ENCODE measurements at regions of chr2 and their contacts with region 1.

Region 1: DNA sequence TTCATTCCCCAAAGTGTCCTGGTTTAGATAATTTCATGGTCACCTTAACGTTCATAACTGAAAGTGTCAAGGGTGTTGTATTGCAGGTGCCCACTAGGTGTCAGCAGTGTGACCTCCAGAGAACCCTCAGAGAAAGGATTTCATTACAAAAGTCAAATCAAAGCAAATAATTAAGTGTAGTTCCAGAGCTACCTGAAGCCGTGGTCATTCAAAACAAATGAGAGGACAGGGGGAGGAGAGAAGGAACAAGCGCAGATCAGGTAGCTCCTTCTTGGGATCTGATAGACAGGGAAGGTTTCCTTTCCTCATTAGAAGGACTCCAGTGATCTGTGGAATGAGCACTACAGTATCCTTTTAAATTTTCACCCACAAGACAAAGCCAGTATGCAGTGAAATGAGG is at the start of gene SLC9A4:
- DNase-seq: peak in 1 of 2 experiments; percentile 70
- H3K4me3 ChIP-seq: no peak within 1 kb of the TSS
- H3K27ac ChIP-seq: no peak within 1 kb of the TSS
- H3K4me1 ChIP-seq: no peaks in the 10 kb centered on the region
- H3K27me3 ChIP-seq: no peaks in the 10 kb centered on the region
- CTCF ChIP-seq: peak; percentile 8 to 76 (median 57)
- EP300 ChIP-seq: no peak
- POLR2A ChIP-seq: no peak
- RAD21 ChIP-seq: peak; percentile 69 to 73
- total RNA-seq, gene SLC9A4: not detected in 2 replicates

Region 2: DNA sequence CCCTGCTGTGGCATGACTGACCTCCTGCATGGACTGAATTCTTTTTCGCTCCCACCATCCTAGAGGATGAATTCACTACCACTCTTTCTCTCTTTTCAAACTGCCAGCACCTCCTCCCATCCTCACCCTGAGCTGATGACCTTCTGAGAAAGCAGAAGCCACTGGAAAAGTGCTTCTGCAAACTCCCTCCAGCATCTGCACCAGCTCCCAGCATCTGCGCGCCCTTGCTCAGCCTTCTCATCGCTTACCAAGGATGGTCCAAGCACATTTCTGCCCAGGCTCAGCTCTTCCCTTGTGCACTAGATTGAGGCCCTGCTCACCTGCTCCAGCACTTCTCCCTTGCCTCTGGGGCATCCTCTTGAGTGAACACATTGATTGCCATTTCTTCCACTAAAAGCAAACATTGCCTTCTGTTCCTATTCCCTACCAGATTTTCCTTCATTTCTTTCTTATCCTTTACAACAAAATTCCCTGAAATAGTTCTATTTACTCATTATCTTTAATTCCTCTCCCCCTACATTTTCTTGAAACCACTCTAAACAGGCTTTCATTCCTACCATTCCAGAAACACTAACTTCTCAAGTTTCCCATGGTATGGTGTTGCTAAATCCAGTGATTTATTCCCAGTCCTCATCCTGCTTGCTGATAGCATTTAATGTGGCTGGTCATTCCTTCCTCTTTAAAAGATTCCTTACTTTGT is 204.4 kb before region 1 on chr2:
- CTCF ChIA-PET with region 1: no interaction called
- POLR2A ChIA-PET with region 1: no interaction called
- DNase-seq: no peak
- H3K4me3 ChIP-seq: no peak overlapping the region
- H3K27ac ChIP-seq: no peak overlapping the region
- H3K4me1 ChIP-seq: no peaks in the 10 kb centered on the region; a peak in 1 of 7 replicates
- H3K27me3 ChIP-seq: no peaks in the 10 kb centered on the region
- CTCF ChIP-seq: no peak
- EP300 ChIP-seq: no peak
- POLR2A ChIP-seq: no peak
- RAD21 ChIP-seq: no peak

Region 3: GRCh38 chr2:102317715-102318114 is 155.3 kb before region 1 on chr2:
- CTCF ChIA-PET with region 1: no interaction called
- POLR2A ChIA-PET with region 1: no interaction called
- DNase-seq: no peak
- H3K4me3 ChIP-seq: no peak overlapping the region
- H3K27ac ChIP-seq: no peak overlapping the region
- H3K4me1 ChIP-seq: no peaks in the 10 kb centered on the region
- H3K27me3 ChIP-seq: no peaks in the 10 kb centered on the region
- CTCF ChIP-seq: no peak
- EP300 ChIP-seq: no peak
- POLR2A ChIP-seq: no peak
- RAD21 ChIP-seq: no peak

Region 4: GRCh38 chr2:102449370-102449974 is 23.5 kb before region 1 on chr2:
- CTCF ChIA-PET with region 1: interaction called, 10 read pairs
- POLR2A ChIA-PET with region 1: no interaction called
- DNase-seq: peak in 1 of 2 experiments; percentile 62
- H3K4me3 ChIP-seq: no peak overlapping the region
- H3K27ac ChIP-seq: no peak overlapping the region
- H3K4me1 ChIP-seq: no peaks in the 10 kb centered on the region
- H3K27me3 ChIP-seq: no peaks in the 10 kb centered on the region
- CTCF ChIP-seq: peak in 2 of 3 experiments; percentile 54 to 59; a peak in 3 of 4 replicates
- EP300 ChIP-seq: no peak
- POLR2A ChIP-seq: no peak
- RAD21 ChIP-seq: peak; percentile 83

Region 5: DNA sequence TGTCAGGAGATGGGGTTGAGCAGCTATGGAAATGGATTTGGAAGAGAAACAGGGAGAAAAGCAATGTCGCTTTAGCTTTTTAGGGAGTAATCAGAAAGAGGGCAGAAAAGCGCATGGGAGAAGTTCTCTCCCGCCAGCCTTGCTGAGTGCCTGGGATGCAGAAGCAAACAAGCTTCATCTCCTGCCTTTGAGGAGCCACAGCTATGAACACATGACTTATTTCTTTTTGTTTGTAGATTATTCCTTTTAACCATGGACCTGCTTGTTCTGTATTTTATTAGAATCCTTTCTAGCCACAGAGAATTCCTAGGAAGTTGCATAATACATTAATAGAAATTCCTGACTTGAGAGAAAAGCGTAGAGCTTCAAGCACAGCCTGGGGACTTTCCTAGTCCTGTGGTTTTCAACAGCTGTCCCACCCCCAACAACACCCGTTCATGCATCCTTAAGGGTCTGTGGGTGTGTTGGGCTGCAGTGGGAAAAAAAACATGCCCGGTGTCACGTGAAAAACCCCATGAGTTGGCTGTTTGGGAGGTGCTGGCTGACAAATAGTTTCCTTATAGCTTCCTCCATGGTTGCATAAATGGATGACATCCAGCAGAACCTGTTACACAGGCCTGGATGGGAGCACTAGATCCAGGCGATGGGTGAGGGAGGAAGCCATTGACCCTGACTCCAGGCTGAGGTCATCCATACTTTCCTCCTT is 14.9 kb after region 1 on chr2:
- CTCF ChIA-PET with region 1: interaction called, 54 read pairs
- POLR2A ChIA-PET with region 1: no interaction called
- DNase-seq: no peak
- H3K4me3 ChIP-seq: no peak overlapping the region
- H3K27ac ChIP-seq: no peak overlapping the region
- H3K4me1 ChIP-seq: peaks cover 0 to 3% (median under 1%) of the 10 kb centered on the region in 4 experiments; a peak in 2 of 7 replicates
- H3K27me3 ChIP-seq: 0 out of 7 replicates have a peak, but pooled peaks cover 0 to 2% (median 0%) of the 10 kb centered on the region in 4 experiments
- CTCF ChIP-seq: no peak
- EP300 ChIP-seq: no peak
- POLR2A ChIP-seq: no peak
- RAD21 ChIP-seq: no peak

Region 6: GRCh38 chr2:102520028-102520427 is 47.0 kb after region 1 on chr2:
- CTCF ChIA-PET with region 1: interaction called, 10 read pairs
- POLR2A ChIA-PET with region 1: no interaction called
- DNase-seq: no peak
- H3K4me3 ChIP-seq: no peak overlapping the region
- H3K27ac ChIP-seq: no peak overlapping the region
- H3K4me1 ChIP-seq: no peaks in the 10 kb centered on the region
- H3K27me3 ChIP-seq: peaks cover 0 to 2% (median 0%) of the 10 kb centered on the region in 4 experiments; a peak in 2 of 7 replicates
- CTCF ChIP-seq: peak; percentile 74 to 87 (median 85)
- EP300 ChIP-seq: no peak
- POLR2A ChIP-seq: no peak
- RAD21 ChIP-seq: peak; percentile 87 to 89

Region 7: GRCh38 chr2:102615622-102616436 is 142.8 kb after region 1 on chr2:
- CTCF ChIA-PET with region 1: interaction called, 57 read pairs
- POLR2A ChIA-PET with region 1: no interaction called
- DNase-seq: no peak
- H3K4me3 ChIP-seq: no peak overlapping the region
- H3K27ac ChIP-seq: no peak overlapping the region
- H3K4me1 ChIP-seq: peaks cover 0 to 13% (median 7%) of the 10 kb centered on the region in 4 experiments; a peak in 6 of 7 replicates
- H3K27me3 ChIP-seq: peaks cover 16 to 30% (median 26%) of the 10 kb centered on the region in 4 experiments
- CTCF ChIP-seq: peak; percentile 80 to 95 (median 89)
- EP300 ChIP-seq: no peak
- POLR2A ChIP-seq: no peak
- RAD21 ChIP-seq: peak; percentile 88 to 90

Measured in H1 (cell line).